AG04449 (cell line): ENCODE measurements at regions of chr10 and their contacts with region 1.

Region 1: DNA sequence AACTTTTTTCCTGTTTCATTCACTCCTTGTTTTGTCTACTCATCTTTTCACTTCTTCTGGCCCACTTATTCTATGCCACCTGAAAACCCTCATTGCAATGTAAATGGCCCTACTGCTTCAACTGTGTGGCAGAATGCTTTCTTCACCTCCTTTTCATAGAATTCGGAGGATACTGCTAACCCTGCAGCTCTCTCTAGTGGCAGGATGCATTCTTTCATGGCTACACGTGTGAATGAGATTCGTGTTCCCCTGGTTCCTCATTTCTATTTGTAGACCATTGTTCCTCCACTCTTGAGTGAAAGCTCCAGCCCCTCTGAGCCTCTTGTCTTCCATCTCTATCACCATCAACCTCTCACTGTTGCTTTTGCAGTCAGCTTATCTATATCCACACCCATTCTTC is 20.9 kb upstream of the CYP26C1 start:
- DNase-seq: no peak
- H3K4me3 ChIP-seq: no peak overlapping the region
- CTCF ChIP-seq: peak; percentile 76

Region 2: DNA sequence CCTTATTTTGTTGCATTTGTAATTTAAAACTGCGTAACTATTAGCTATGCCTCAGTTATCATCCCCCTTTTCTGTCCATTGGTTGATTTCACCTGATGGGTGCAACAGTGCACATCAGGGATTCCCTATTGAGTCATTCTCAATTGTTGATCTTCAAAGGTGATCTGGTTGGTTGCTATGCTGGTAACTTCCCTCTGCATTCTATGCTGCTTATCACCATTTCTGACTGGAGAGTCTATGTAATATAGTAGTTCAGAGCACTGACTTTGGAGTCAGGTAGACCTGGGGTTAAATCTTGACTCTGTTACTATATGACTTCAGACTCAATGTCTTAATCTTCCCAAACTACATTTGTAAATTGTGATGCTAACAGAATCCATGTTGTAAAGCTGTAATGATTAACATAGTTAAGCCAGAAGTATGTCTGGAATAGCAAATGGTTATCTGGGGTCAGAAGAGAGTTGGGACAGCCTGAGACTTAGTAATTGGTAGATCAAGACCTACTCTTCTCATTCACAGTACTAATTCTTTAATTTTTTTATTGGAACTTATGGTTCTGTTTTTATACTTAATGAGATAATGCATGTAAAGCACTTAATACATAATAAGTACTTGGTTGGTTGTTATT is 153.3 kb before region 1 on chr10:
- CTCF ChIA-PET with region 1: interaction called, 39 read pairs
- POLR2A ChIA-PET with region 1: no interaction called
- DNase-seq: no peak
- H3K4me3 ChIP-seq: no peak overlapping the region
- CTCF ChIP-seq: no peak

Region 3: DNA sequence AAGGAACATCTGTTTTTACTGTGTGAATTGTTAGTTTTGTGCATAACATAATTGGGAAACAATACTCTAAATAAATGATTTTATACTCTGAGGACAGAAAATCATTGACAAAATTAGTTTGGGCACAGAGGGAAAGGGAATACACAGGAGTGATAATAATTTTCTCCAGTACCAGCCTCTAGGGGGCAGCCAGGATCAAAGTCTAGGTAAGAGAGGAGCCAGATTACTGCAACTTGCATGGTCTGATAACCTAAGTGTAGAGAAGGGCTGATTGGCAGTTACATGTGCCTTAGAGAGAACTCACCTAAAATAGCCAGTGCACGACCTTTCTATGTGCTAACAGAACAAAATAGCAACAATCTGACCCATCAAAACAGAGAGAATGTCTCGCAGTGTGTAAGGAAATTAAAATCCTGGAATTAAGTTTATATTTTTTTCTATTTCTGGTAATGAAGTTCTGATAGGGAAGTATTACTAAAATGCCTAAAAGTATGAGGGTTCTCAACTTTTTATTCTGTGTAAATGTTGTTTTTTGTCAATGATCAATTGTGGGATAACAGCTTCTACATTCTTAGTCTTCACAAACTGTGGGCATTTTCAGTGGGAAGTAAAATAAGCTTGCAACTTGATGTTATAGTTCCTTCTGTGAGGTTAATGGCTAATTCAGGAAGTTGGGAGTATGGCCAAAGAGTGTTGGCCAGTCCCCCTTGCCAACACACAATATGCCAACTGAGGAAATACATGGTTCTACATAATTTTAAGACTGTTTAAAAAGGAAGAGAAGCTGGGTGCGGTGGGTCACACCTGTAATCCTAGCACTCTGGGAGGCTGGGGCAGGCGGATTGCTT is 125.0 kb before region 1 on chr10:
- CTCF ChIA-PET with region 1: interaction called, 22 read pairs
- POLR2A ChIA-PET with region 1: no interaction called
- DNase-seq: peak; percentile 7
- H3K4me3 ChIP-seq: no peak overlapping the region
- CTCF ChIP-seq: peak; percentile 74

Region 4: DNA sequence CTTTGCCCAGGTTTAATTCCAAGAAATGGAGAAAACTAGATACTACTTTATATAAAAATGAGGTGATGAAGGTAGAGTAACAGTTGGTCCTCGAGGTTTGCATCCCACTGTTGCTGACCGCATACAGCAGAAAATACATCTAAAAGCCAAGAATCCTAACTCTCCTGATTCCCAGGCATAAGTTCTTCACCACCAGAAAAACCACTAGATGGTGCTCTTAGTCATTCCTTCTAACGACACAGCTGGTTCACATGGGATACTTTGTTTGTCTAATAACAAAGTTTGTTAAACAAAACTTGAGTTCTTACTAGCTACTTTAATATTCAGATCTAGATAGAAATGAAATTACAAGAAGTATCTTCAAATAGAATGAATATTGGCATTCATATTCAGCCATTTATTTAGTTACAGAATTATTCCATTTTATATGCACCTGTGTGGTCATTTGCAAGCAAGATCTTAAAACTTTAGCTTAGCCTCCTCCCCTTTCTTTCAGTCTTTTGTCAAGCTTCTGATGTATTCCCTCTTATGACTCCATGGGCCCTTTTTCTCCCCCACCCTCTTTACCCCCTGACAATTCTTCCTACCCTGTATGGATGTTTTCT is 33.2 kb before region 1 on chr10:
- CTCF ChIA-PET with region 1: interaction called, 336 read pairs
- POLR2A ChIA-PET with region 1: no interaction called
- DNase-seq: no peak
- H3K4me3 ChIP-seq: no peak overlapping the region
- CTCF ChIP-seq: peak; percentile 56

Region 5: GRCh38 chr10:93062514-93063143 is 22.9 kb after region 1 on chr10:
- CTCF ChIA-PET with region 1: interaction called, 13 read pairs
- POLR2A ChIA-PET with region 1: no interaction called
- DNase-seq: no peak
- H3K4me3 ChIP-seq: peak overlapping the region; percentile 50
- CTCF ChIP-seq: peak; percentile 62

Region 6: GRCh38 chr10:93088466-93088865 is 48.7 kb after region 1 on chr10:
- CTCF ChIA-PET with region 1: no interaction called
- POLR2A ChIA-PET with region 1: no interaction called
- DNase-seq: no peak
- H3K4me3 ChIP-seq: no peak overlapping the region
- CTCF ChIP-seq: no peak